IMR-90 (cell line): ENCODE measurements at regions of chr22 and their contacts with region 1.

Region 1: GRCh38 chr22:49760630-49761571 is 66.8 kb downstream of the BRD1 start:
- DNase-seq: no peak
- ATAC-seq: peak; percentile 28; the same call in 1 of the 2 replicates
- H3K4me3 ChIP-seq: no peak overlapping the region
- H3K27ac ChIP-seq: no peak overlapping the region
- H3K4me1 ChIP-seq: no peaks in the 10 kb centered on the region
- H3K27me3 ChIP-seq: 0 out of 2 replicates have a peak, but pooled peaks cover 5% of the 10 kb centered on the region
- CTCF ChIP-seq: no peak
- POLR2A ChIP-seq: no peak
- RAD21 ChIP-seq: no peak

Region 2: DNA sequence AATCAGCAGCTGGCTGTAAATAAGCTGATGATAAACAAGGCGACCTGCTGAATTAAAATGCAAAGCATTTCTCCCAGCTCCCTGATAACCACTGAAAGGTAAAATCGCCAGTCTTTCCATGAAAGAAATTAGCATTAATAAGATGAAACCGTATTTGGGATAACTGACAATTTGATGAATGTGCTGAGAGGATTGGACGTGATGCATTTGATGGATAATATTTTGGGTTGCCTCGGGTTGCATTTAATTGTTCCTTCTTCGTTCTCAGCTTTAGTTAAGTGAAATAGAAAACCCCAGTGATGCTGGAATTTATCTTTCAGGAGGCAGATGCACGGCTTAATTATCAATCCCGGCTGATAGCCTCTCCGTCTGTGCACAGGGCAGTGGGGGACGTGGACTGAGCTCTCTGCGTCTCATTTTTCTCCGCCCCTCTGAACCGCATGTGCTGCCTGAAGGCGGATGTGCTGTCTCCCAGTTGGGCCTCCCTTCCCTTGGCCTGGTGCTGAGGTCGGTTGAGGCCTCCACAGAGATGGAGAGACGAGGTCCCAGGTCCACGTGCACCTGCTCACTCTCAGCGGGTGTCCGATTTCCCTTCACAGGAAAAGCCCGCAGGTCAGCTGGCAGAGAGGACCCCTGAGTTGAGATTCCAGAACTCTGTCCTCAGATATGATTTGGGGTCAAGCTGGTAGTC is 779.4 kb before region 1 on chr22:
- CTCF ChIA-PET with region 1: no interaction called
- POLR2A ChIA-PET with region 1: interaction called, 11 read pairs
- dilution Hi-C with region 1: no loop called
- in situ Hi-C with region 1: no loop called
- intact Hi-C with region 1: no loop called
- DNase-seq: no peak
- ATAC-seq: no peak
- H3K4me3 ChIP-seq: no peak overlapping the region
- H3K27ac ChIP-seq: no peak overlapping the region
- H3K4me1 ChIP-seq: no peaks in the 10 kb centered on the region
- H3K27me3 ChIP-seq: no peaks in the 10 kb centered on the region
- CTCF ChIP-seq: no peak
- POLR2A ChIP-seq: no peak
- RAD21 ChIP-seq: no peak

Region 3: GRCh38 chr22:49330421-49331222 is 430.3 kb before region 1 on chr22:
- CTCF ChIA-PET with region 1: no interaction called
- POLR2A ChIA-PET with region 1: no interaction called
- dilution Hi-C with region 1: no loop called
- in situ Hi-C with region 1: no loop called
- intact Hi-C with region 1: no loop called
- DNase-seq: no peak
- ATAC-seq: no peak
- H3K4me3 ChIP-seq: no peak overlapping the region
- H3K27ac ChIP-seq: no peak overlapping the region
- H3K4me1 ChIP-seq: no peaks in the 10 kb centered on the region
- H3K27me3 ChIP-seq: no peaks in the 10 kb centered on the region
- CTCF ChIP-seq: no peak
- POLR2A ChIP-seq: no peak
- RAD21 ChIP-seq: no peak